ENCODE measurements at regions of chr22 and their contacts with region 1.

Region 1: GRCh38 chr22:25465949-25466348 is 98.5 kb upstream of the GRK3 start:
- DNase-seq: no peak
- ATAC-seq: no peak
- H3K4me3 Mint-ChIP-seq: no peak overlapping the region
- H3K27ac Mint-ChIP-seq: peak overlapping the region; percentile 70
- H3K4me1 Mint-ChIP-seq: peaks cover 15% of the 10 kb centered on the region
- H3K27me3 Mint-ChIP-seq: no peaks in the 10 kb centered on the region

Region 2: GRCh38 chr22:25447686-25448434 is 18.1 kb before region 1 on chr22:
- CTCF ChIA-PET with region 1: interaction called, 10 read pairs
- DNase-seq: peak; percentile 94
- ATAC-seq: peak; percentile 92
- H3K4me3 Mint-ChIP-seq: peak overlapping the region; percentile 83
- H3K27ac Mint-ChIP-seq: peak overlapping the region; percentile 89
- H3K4me1 Mint-ChIP-seq: peaks cover 44% of the 10 kb centered on the region
- H3K27me3 Mint-ChIP-seq: no peaks in the 10 kb centered on the region

Region 3: GRCh38 chr22:25478528-25478927 is 12.6 kb after region 1 on chr22:
- CTCF ChIA-PET with region 1: no interaction called
- DNase-seq: no peak
- ATAC-seq: no peak
- H3K4me3 Mint-ChIP-seq: no peak overlapping the region
- H3K27ac Mint-ChIP-seq: no peak overlapping the region
- H3K4me1 Mint-ChIP-seq: peaks cover 6% of the 10 kb centered on the region
- H3K27me3 Mint-ChIP-seq: no peaks in the 10 kb centered on the region

Region 4: GRCh38 chr22:25546751-25547150 is 80.8 kb after region 1 on chr22:
- CTCF ChIA-PET with region 1: interaction called, 10 read pairs
- DNase-seq: no peak
- ATAC-seq: no peak
- H3K4me3 Mint-ChIP-seq: no peak overlapping the region
- H3K27ac Mint-ChIP-seq: no peak overlapping the region
- H3K4me1 Mint-ChIP-seq: peaks cover 53% of the 10 kb centered on the region
- H3K27me3 Mint-ChIP-seq: no peaks in the 10 kb centered on the region

Region 5: GRCh38 chr22:25702040-25702439 is 236.1 kb after region 1 on chr22:
- CTCF ChIA-PET with region 1: interaction called, 18 read pairs
- DNase-seq: no peak
- ATAC-seq: no peak
- H3K4me3 Mint-ChIP-seq: peak overlapping the region; percentile 44
- H3K27ac Mint-ChIP-seq: peak overlapping the region; percentile 70
- H3K4me1 Mint-ChIP-seq: peaks cover 44% of the 10 kb centered on the region
- H3K27me3 Mint-ChIP-seq: no peaks in the 10 kb centered on the region